Activated T-helper 2 cell treated with anti-CD3 and anti-CD28 coated beads, Interferon-gamma antibody, Interleukin-2, Interleukin-4, amounts not matched to agents 10 μg/mL and 5 μg/mL and 100 μg/mL, durations not matched to agents 14 hours and 24 hours and 36 hours (primary cell): ENCODE measurements at regions of chr6 and their contacts with region 1.

Region 1: DNA sequence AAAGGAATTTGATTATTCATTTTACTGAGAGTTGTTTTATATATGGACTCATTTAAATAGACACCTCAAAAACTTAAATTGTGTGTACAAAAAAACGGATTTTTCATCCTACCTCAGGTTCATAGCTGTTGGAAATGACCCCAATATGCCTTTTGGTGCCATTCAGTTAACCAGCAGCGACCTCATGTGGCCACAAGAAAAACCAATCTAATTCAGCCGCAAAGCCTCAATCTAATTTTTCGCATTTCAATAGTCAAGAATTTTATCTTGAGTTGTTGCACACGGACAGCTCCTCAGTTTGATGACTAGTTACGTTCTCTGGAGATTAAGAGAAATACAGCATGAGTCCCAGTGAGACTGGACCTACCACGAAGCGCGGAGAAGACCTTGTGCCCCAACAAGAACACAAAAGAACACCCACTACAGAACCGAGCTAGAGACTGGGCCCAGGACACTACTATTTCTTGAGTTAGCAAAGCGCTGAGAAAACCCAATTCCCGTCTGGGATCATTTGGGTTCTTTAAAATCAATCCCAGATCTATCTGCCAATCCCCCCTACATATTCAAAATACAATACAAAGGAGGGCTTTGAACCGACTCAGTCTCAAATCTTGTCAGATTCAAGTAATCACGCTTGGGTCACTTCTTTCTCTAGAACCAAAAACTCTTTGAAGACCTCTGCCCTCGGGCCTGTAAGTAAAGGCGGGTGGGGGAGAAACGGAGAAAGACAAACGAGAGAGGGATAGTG is 1.1 kb downstream of the TCP11 start:
- DNase-seq: no peak
- H3K4me3 Mint-ChIP-seq: peak overlapping the region; percentile 26
- H3K27ac Mint-ChIP-seq: peak overlapping the region; percentile 52
- H3K4me1 Mint-ChIP-seq: peaks cover 16% of the 10 kb centered on the region
- H3K27me3 Mint-ChIP-seq: peaks cover 26% of the 10 kb centered on the region

Region 2: GRCh38 chr6:34912715-34913464 is 227.2 kb before region 1 on chr6:
- intact Hi-C with region 1: loop called (anchors 10 kb)
- DNase-seq: peak; percentile 33
- H3K4me3 Mint-ChIP-seq: peak overlapping the region; percentile 0
- H3K27ac Mint-ChIP-seq: peak overlapping the region; percentile 11
- H3K4me1 Mint-ChIP-seq: peaks cover 28% of the 10 kb centered on the region
- H3K27me3 Mint-ChIP-seq: peaks cover 28% of the 10 kb centered on the region